Caco-2 (cell line): ENCODE measurements at regions of chr19 and their contacts with region 1.

Region 1: DNA sequence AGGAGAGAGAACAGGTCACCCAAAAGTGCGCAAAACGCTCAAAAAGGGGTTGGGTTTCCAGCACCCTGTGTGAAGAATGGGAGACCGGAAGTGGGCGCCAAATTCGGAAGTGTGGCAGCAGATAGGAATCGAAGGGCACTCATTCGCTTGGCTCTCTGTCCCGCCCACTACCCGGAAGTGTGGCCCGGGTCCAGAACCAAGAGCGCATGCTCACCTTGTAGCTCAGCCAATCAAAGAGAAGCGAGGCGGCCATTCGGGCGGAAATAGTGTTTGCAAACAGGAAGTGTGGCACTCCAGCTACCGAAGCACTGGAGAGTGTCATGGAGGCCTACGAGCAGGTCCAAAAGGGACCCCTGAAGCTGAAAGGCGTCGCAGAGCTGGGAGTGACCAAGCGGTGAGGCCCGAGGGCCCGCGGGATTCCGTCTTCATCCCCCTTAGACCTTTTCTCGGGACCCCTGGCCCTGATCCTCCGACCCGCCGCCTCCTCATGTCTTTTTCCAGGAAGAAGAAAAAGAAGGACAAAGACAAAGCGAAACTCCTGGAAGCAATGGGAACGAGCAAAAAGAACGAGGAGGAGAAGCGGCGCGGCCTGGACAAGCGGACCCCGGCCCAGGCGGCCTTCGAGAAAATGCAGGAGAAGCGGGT is at the start of gene FAM32A:
- DNase-seq: peak; percentile 98
- H3K4me3 ChIP-seq: peak within 1 kb of the TSS; percentile 80
- H3K4me3 Mint-ChIP-seq: peak within 1 kb of the TSS; percentile 100
- H3K27ac Mint-ChIP-seq: peak within 1 kb of the TSS; percentile 99
- H3K4me1 ChIP-seq: peaks cover 22% of the 10 kb centered on the region
- H3K4me1 Mint-ChIP-seq: peaks cover 10% of the 10 kb centered on the region
- H3K27me3 ChIP-seq: no peaks in the 10 kb centered on the region
- H3K27me3 Mint-ChIP-seq: no peaks in the 10 kb centered on the region
- CTCF ChIP-seq: peak in 1 of 2 experiments; percentile 14
- total RNA-seq, gene FAM32A: 113 and 126 TPM in 2 replicates

Region 2: DNA sequence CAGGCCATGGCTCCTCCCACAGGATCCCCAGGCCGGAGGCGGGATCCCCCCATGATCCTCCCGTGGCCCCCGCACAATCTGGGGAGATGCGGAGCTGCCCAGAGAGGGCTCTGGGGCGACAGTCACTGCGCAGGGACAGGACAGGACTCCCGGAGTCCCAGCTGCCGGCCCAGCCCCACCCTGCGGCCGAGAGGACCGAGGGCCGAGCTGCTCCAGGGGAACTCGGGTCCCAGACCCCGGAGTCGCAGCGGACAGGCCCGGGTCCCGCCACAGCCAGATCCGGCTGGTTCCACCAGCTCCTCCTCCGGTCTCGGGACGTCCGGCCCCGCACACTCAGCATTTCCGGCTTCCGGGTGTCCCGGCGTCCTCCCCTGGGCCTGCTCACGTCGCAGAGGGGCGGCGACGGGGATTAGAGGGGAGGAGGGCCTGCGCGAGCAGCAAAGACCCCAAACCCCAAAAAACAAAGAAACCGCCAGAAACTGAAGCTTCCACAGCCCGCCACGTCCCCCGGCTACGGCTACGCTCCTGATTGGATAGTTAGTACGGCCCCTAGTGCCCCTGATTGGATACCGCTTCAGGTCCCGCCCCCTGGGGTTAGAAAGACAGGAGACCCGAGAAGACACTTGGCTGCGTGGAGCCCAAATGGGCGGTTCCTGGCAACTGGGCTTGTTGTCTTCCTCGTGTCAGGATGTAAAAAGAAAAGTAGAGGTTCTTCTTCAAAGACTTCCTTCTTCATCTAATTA is 348.5 kb before region 1 on chr19:
- CTCF ChIA-PET with region 1: interaction called, 4 read pairs
- POLR2A ChIA-PET with region 1: interaction called, 11 read pairs
- intact Hi-C with region 1: loop called (anchors 10 kb)
- DNase-seq: peak; percentile 97 to 98
- H3K4me3 ChIP-seq: peak overlapping the region; percentile 68
- H3K4me3 Mint-ChIP-seq: peak overlapping the region; percentile 76
- H3K27ac Mint-ChIP-seq: peak overlapping the region; percentile 94
- H3K4me1 ChIP-seq: peaks cover 30% of the 10 kb centered on the region
- H3K4me1 Mint-ChIP-seq: peaks cover 14% of the 10 kb centered on the region
- H3K27me3 ChIP-seq: no peaks in the 10 kb centered on the region
- H3K27me3 Mint-ChIP-seq: no peaks in the 10 kb centered on the region
- CTCF ChIP-seq: no peak

Region 3: GRCh38 chr19:16041299-16041990 is 143.8 kb before region 1 on chr19:
- CTCF ChIA-PET with region 1: interaction called, 24 read pairs
- POLR2A ChIA-PET with region 1: interaction called, 8 read pairs
- intact Hi-C with region 1: loop called (anchors 1 kb)
- DNase-seq: peak; percentile 71 to 89
- H3K4me3 ChIP-seq: no peak overlapping the region; the same call in 1 of the 2 replicates
- H3K4me3 Mint-ChIP-seq: peak overlapping the region; percentile 50
- H3K27ac Mint-ChIP-seq: no peak overlapping the region
- H3K4me1 ChIP-seq: no peaks in the 10 kb centered on the region; the same call in 1 of the 2 replicates
- H3K4me1 Mint-ChIP-seq: no peaks in the 10 kb centered on the region
- H3K27me3 ChIP-seq: no peaks in the 10 kb centered on the region
- H3K27me3 Mint-ChIP-seq: no peaks in the 10 kb centered on the region
- CTCF ChIP-seq: peak; percentile 88 to 96

Region 4: DNA sequence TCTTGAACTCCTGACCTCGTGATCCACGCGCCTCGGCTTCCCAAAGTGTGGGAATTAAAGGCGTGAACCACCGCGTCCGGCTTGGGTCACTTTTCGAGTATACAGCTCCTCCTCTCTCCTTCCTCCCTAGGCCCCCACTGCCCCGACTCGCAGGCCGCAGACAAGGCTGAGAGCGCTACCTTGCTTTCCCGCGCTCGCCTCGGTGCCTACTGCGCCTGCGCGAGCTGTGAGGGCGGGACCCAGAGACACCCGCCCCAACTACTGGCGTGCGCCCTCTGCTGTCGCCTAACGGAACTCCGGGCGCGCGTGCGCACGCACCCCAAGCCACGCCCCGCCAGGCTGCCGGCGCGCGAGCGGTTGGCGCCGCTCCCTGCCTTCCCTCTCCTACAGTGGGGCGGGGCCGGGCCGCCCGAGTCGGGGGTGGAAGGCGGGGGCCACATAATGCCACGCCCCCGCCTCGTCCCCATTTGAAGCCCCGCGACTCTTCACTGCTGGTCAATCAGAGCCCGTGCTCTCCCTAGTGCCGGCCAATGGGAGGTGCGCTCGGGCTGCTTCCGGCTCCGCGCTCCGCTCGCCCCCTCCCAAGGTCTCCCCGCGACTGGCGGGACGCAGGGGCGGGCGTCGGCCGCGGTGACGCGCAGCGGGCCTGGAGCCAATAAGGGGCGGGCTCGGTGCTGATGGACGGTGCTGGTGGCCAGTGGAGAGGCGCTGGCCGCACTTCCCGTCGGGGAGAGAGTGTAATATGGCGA is 73.9 kb before region 1 on chr19 and contains the start of gene RAB8A:
- CTCF ChIA-PET with region 1: interaction called, 9 read pairs
- POLR2A ChIA-PET with region 1: no interaction called
- intact Hi-C with region 1: loop called (anchors 2 kb)
- DNase-seq: peak; percentile 98
- H3K4me3 ChIP-seq: peak within 1 kb of the TSS; percentile 72
- H3K4me3 Mint-ChIP-seq: peak within 1 kb of the TSS; percentile 96
- H3K27ac Mint-ChIP-seq: peak within 1 kb of the TSS; percentile 95
- H3K4me1 ChIP-seq: peaks cover 26% of the 10 kb centered on the region
- H3K4me1 Mint-ChIP-seq: peaks cover 20% of the 10 kb centered on the region
- H3K27me3 ChIP-seq: no peaks in the 10 kb centered on the region
- H3K27me3 Mint-ChIP-seq: no peaks in the 10 kb centered on the region
- CTCF ChIP-seq: peak; percentile 69 to 81
- total RNA-seq, gene RAB8A: 108 and 129 TPM in 2 replicates

Region 5: GRCh38 chr19:16197622-16198369 is 12.6 kb after region 1 on chr19 and contains the start of gene AP1M1:
- CTCF ChIA-PET with region 1: interaction called, 17 read pairs
- POLR2A ChIA-PET with region 1: interaction called, 28 read pairs
- intact Hi-C with region 1: no loop called
- DNase-seq: peak; percentile 98
- H3K4me3 ChIP-seq: peak within 1 kb of the TSS; percentile 70
- H3K4me3 Mint-ChIP-seq: peak within 1 kb of the TSS; percentile 81
- H3K27ac Mint-ChIP-seq: peak within 1 kb of the TSS; percentile 83
- H3K4me1 ChIP-seq: peaks cover 20% of the 10 kb centered on the region
- H3K4me1 Mint-ChIP-seq: peaks cover 7% of the 10 kb centered on the region
- H3K27me3 ChIP-seq: no peaks in the 10 kb centered on the region
- H3K27me3 Mint-ChIP-seq: no peaks in the 10 kb centered on the region
- CTCF ChIP-seq: no peak
- total RNA-seq, gene AP1M1: 98.0 and 105 TPM in 2 replicates

Region 6: DNA sequence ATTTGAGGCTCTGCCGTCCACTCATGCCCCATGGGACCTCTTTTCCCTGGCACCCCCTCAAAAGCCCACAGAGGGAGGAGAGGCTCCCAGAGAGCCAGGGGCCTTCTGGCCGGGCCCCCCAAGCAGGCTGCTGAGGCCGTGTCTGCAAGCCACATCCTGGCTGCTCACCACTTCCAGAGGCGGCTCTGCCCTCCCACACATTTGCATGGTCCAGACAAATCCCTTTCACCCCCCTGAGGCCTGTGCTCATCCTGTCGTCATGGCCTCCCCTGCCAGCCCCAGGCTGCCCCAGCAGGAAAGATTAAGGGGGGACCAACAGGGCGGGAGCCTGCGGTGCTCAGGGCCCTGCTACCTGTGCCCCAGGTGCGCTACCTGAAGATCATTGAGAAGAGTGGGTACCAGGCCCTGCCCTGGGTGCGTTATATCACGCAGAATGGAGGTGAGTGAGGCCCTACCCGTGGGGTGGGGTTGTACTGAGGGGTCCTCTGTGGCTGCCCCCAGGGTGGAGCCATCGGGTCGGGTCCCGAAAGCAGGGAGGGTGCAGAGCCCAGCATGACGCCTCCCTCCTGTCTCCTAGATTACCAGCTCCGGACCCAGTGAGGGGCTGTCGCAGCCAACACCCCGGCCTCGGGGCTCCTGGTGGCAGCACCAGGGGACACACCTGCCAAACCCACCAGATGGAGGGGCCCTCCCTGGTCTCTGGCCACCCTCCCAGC is 48.7 kb after region 1 on chr19:
- CTCF ChIA-PET with region 1: no interaction called
- POLR2A ChIA-PET with region 1: no interaction called
- intact Hi-C with region 1: no loop called
- DNase-seq: no peak
- H3K4me3 ChIP-seq: no peak overlapping the region
- H3K4me3 Mint-ChIP-seq: no peak overlapping the region
- H3K27ac Mint-ChIP-seq: no peak overlapping the region
- H3K4me1 ChIP-seq: no peaks in the 10 kb centered on the region
- H3K4me1 Mint-ChIP-seq: no peaks in the 10 kb centered on the region
- H3K27me3 ChIP-seq: no peaks in the 10 kb centered on the region
- H3K27me3 Mint-ChIP-seq: no peaks in the 10 kb centered on the region
- CTCF ChIP-seq: no peak

Region 7: DNA sequence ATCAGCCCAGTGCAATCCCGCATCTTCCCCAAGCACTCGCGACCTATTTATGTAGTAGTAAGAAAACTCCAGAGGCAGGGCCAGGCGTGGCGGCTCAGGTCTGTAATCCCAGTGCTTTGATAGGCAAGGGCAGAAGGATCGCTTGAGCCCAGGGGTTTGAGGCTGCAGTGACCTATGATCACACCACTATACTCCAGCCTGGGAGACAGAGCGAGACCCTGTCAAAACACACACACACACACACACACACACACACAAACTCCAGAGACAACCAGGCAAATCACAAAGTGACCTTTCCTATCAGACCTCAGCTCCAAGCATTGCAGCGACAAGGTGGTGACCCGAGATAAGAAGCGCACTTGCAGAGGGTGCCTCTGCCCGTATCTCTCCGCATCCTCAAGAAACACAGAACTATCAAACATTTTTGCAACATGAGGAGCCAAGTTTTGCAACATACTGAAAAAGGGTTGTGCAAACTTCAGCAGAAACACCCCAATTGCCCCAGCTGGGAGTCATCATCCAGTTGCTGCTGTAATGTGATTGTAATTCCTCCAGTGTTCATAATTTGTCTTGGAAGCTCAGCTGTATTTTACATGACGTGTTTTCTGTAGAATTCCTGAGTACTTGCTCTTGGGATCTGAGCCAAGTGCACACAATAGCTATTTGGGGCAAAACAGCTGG is 130.7 kb after region 1 on chr19:
- CTCF ChIA-PET with region 1: no interaction called
- POLR2A ChIA-PET with region 1: no interaction called
- intact Hi-C with region 1: no loop called
- DNase-seq: peak; percentile 60 to 74
- H3K4me3 ChIP-seq: no peak overlapping the region
- H3K4me3 Mint-ChIP-seq: no peak overlapping the region
- H3K27ac Mint-ChIP-seq: no peak overlapping the region
- H3K4me1 ChIP-seq: peaks cover 9% of the 10 kb centered on the region; the same call in 1 of the 2 replicates
- H3K4me1 Mint-ChIP-seq: no peaks in the 10 kb centered on the region
- H3K27me3 ChIP-seq: no peaks in the 10 kb centered on the region
- H3K27me3 Mint-ChIP-seq: no peaks in the 10 kb centered on the region
- CTCF ChIP-seq: no peak